Naive thymus-derived CD8-positive, alpha-beta T cell (primary cell): ENCODE measurements at regions of chr2 and their contacts with region 1.

Region 1: DNA sequence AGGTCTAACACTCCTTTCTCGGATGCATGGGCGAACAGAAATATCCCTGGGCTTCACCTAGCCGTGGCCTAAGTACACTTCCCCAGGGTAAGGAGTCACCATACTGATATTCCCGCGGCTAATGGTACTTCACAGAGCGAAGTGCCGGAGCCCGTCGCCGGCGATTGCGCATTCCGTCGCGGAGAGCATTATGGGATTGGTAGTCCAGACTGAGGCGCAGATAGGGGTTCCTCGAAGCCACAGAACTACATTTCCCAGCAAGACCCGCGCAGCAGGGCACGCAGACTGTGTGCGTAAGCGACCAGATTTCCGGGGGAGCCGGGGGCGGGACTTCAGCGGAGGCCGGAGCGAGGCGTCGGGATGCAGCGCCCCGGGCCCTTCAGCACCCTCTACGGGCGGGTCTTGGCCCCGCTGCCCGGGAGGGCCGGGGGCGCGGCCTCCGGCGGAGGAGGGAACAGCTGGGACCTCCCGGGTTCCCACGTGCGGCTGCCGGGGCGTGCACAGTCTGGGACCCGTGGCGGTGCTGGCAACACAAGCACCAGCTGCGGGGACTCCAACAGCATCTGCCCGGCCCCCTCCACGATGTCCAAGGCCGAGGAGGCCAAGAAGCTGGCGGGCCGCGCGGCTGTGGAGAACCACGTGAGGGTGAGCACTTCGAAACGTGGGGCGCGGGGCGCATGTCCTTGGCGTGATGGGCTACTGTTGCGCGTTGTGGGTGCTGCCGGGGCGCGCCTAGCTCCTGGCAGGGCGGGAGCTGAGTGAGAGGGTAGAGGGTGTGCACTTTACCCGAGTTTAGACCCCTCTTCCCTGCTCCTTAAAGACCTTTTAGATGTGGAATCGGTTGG is at the start of gene RPIA:
- DNase-seq: peak; percentile 94 to 99 (median 99)
- ATAC-seq: peak; percentile 91 to 93
- H3K4me3 Mint-ChIP-seq: peak within 1 kb of the TSS; percentile 94 to 99 (median 97)
- H3K27ac Mint-ChIP-seq: peak within 1 kb of the TSS; percentile 88 to 99 (median 97)
- H3K4me1 Mint-ChIP-seq: peaks cover 38 to 65% (median 64%) of the 10 kb centered on the region in 4 donors
- H3K27me3 Mint-ChIP-seq: no peaks in the 10 kb centered on the region
- polyA plus RNA-seq, gene RPIA: 59.7 to 72.8 (median 64.9) TPM

Region 2: GRCh38 chr2:88615822-88616221 is 75.7 kb before region 1 on chr2:
- POLR2A ChIA-PET with region 1: no interaction called
- DNase-seq: no peak
- ATAC-seq: no peak
- H3K4me3 Mint-ChIP-seq: no peak overlapping the region
- H3K27ac Mint-ChIP-seq: no peak overlapping the region
- H3K4me1 Mint-ChIP-seq: peaks cover 19 to 43% (median 33%) of the 10 kb centered on the region in 4 donors
- H3K27me3 Mint-ChIP-seq: no peaks in the 10 kb centered on the region

Region 3: DNA sequence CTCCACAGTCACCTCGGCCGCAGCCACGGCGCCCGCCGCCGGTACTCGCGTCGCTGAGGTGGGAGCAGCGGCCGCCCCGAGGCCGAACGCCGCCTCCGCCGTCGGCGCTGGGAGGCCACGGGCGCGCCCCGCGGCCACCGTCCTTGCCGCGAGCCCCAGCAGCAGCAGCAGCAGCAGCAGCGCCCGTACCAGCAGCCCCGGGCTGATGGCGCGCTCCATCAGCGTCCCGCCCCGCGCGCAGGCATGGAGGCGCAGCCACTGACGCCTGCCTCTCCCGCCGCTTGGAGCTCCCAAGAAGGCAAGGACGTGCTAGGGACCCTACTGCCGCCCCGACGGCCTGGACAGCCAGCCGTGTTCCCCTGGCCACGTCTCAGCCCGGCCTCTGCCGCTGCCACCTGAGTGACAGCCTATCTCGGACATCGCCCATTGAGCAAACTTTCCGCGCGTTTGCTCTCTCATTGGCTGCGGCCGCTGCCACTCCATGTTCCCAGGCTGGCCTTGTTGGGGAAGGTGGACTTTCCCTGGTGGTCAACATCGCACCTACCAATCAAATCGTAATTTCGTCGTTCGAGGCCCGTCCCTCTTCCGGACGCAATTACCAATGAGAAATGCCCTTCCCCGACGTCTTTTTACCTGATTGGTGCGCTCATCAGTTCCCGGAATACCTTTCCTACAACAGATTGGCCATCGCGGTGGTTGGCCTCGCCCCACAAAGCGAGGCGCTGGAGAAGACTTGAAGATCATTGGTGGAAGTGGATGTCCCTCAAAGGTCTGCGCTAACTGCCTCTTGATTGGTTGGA is 64.3 kb before region 1 on chr2 and contains the start of gene EIF2AK3:
- POLR2A ChIA-PET with region 1: interaction called, 32 read pairs
- DNase-seq: peak; percentile 83 to 99 (median 96)
- ATAC-seq: peak; percentile 86
- H3K4me3 Mint-ChIP-seq: peak within 1 kb of the TSS in 8 of 10 donors; percentile 89 to 98 (median 95)
- H3K27ac Mint-ChIP-seq: peak within 1 kb of the TSS in 9 of 10 donors; percentile 89 to 97 (median 95)
- H3K4me1 Mint-ChIP-seq: peaks cover 0 to 18% (median 7%) of the 10 kb centered on the region in 4 donors
- H3K27me3 Mint-ChIP-seq: no peaks in the 10 kb centered on the region
- polyA plus RNA-seq, gene EIF2AK3: 3.1 to 8.9 (median 3.1) TPM